ENCODE measurements at regions of chr1 and their contacts with region 1.

Region 1: DNA sequence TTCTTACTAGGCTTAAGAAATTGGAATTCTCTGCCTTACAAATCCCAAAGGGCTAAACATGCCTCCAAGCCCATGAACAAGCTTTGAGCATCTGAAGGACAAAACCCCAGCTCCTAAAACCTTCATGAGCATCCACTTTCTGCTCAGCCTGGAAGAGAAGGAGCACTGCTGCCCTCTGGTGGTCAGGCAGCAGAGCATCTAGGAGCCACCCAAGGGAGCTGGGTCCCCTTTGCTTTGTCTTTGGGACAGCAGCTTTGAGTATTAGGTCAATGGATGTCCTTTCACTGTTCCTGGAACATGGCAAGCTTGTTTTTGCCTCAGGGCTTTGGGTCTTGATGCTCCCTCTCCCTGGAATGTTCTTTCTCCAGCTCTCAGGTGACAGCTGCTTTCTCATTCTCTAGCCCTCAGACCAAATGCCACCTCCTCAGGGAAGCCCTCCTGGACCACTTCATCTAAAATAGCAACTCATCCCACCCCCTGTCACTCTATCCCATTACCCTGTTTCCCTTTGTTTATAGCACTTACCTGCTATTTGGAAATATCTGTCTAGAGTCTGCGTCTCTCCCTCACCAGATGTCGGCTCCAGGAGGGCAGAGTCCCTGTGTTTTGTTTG is 25.7 kb downstream of the RAB7B start:
- DNase-seq: peak in 1 of 2 donors; percentile 77
- H3K4me3 ChIP-seq: no peak overlapping the region
- H3K27ac ChIP-seq: no peak overlapping the region
- H3K4me1 ChIP-seq: peaks cover 0 to 19% (median 0%) of the 10 kb centered on the region in 4 donors
- H3K27me3 ChIP-seq: peaks cover 0 to 8% of the 10 kb centered on the region in 2 donors
- CTCF ChIP-seq: peak; percentile 97

Region 2: GRCh38 chr1:205591522-205592351 is 385.8 kb before region 1 on chr1:
- intact Hi-C with region 1: loop called (anchors 10 kb)
- DNase-seq: peak; percentile 87 to 90
- H3K4me3 ChIP-seq: peak overlapping the region; percentile 34 to 46
- H3K27ac ChIP-seq: no peak overlapping the region
- H3K4me1 ChIP-seq: peaks cover 0 to 9% (median 3%) of the 10 kb centered on the region in 4 donors
- H3K27me3 ChIP-seq: no peaks in the 10 kb centered on the region
- CTCF ChIP-seq: peak; percentile 98 to 99

Region 3: DNA sequence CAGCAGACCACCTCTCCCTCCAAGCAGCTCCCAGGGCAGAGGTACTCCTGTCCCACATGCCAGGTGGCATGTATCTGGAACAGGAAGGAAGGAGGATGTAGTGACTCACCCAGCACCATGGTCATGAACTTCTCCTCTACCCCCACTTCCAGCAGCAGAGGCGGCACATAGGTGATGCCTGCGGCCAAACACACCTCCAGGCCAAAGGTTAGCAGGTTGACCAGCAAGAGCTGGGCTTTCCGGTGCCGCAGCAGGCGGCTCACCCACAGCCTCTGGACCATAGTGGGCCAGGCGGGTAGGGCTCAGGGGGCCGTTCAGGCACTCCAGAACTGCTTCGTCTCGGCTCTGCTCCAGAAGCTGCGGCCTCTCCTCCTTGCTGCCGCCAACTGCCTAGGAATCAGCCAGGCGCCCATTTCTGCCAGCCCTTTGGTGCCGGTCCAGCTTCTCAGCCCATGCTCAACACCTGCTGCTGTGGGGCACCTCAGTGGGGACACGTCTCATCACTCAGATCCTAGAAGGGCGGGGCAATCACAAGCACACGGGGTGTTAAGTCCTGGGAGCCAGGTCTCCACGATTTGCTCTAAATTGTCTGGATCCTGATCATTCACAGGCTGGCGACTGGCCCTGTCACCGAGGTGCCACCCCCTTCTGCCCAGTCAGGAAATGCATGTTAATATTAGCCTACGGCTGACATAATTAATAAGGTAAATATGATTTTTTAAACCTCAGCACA is 313.0 kb before region 1 on chr1:
- intact Hi-C with region 1: loop called (anchors 5 kb)
- DNase-seq: no peak
- H3K4me3 ChIP-seq: no peak overlapping the region
- H3K27ac ChIP-seq: no peak overlapping the region
- H3K4me1 ChIP-seq: peaks cover 0 to 21% (median 5%) of the 10 kb centered on the region in 4 donors
- H3K27me3 ChIP-seq: no peaks in the 10 kb centered on the region
- CTCF ChIP-seq: no peak

Region 4: DNA sequence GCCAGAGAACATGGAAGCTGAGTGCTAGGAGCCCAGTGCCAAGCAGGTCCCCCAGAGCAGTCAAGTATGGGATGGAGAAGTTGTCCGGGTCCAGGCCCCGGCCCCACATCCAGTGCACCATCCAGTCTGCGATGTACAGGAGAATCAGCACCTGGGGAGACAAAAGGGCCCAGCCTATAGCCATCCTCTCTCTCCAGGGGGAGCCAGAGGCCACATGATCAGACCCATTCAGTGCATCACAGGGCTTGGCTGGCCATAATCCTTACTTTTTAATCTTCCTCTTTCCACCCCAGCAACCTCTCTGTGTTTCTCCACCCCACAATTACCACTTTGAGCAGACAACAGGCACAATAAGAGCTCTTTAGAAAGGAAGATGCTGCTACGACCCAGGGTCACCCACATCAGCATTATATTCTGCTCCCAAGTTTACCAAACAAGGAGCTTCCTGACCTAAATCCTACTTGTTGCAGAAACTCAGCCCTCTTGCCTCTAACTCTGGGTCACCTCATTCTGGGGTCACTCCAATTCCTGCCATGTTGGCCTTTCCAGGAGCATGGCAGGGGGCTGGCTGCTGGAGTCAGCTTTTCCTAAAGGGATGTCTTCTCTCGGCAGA is 185.8 kb before region 1 on chr1:
- intact Hi-C with region 1: loop called (anchors 2 kb)
- DNase-seq: peak in 1 of 2 donors; percentile 59
- H3K4me3 ChIP-seq: no peak overlapping the region
- H3K27ac ChIP-seq: no peak overlapping the region
- H3K4me1 ChIP-seq: no peaks in the 10 kb centered on the region
- H3K27me3 ChIP-seq: no peaks in the 10 kb centered on the region
- CTCF ChIP-seq: peak; percentile 69 to 81

Region 5: DNA sequence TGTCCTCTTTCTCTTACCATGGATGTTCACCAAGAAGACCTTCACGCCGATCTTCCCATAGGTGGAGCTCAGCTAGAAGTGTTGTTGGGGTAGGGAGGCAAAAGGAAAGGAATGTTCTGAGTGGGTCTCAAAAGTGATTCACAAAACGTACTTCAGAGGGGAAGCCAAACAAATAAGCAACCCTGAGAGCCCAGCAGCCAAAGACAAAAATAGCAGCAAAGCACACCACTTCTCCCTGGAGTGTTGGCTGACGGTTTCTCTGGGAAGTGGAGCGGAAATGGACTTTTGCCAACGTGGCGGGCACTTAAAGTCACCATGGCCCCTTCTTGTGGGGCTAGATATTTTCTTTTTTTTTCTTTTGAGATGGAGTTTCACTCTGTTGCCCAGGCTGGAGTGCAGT is 57.3 kb before region 1 on chr1:
- intact Hi-C with region 1: loop called (anchors 5 kb)
- DNase-seq: peak; percentile 34 to 81
- H3K4me3 ChIP-seq: no peak overlapping the region
- H3K27ac ChIP-seq: peak overlapping the region; percentile 43 to 62
- H3K4me1 ChIP-seq: peaks cover 0 to 54% (median 28%) of the 10 kb centered on the region in 4 donors
- H3K27me3 ChIP-seq: no peaks in the 10 kb centered on the region
- CTCF ChIP-seq: no peak

Region 6: GRCh38 chr1:205994346-205994745 is 16.8 kb after region 1 on chr1:
- intact Hi-C with region 1: no loop called
- DNase-seq: no peak
- H3K4me3 ChIP-seq: no peak overlapping the region
- H3K27ac ChIP-seq: no peak overlapping the region
- H3K4me1 ChIP-seq: peaks cover 0 to 7% (median 0%) of the 10 kb centered on the region in 4 donors
- H3K27me3 ChIP-seq: no peaks in the 10 kb centered on the region
- CTCF ChIP-seq: no peak

Region 7: GRCh38 chr1:206059355-206059915 is 81.9 kb after region 1 on chr1:
- intact Hi-C with region 1: no loop called
- DNase-seq: no peak
- H3K4me3 ChIP-seq: no peak overlapping the region
- H3K27ac ChIP-seq: no peak overlapping the region
- H3K4me1 ChIP-seq: no peaks in the 10 kb centered on the region
- H3K27me3 ChIP-seq: no peaks in the 10 kb centered on the region
- CTCF ChIP-seq: no peak